WTC11 (cell line): ENCODE measurements at regions of chr11 and their contacts with region 1.

Region 1: GRCh38 chr11:75706260-75706729 is 11.3 kb upstream of the MOGAT2 start:
- DNase-seq: peak; percentile 80
- ATAC-seq: peak; percentile 99
- H3K4me3 Mint-ChIP-seq: no peak overlapping the region
- H3K27ac Mint-ChIP-seq: no peak overlapping the region
- H3K4me1 Mint-ChIP-seq: no peaks in the 10 kb centered on the region
- H3K27me3 Mint-ChIP-seq: peaks cover 19% of the 10 kb centered on the region
- CTCF ChIP-seq: peak; percentile 96

Region 2: GRCh38 chr11:75481223-75481921 is 224.9 kb before region 1 on chr11:
- CTCF ChIA-PET with region 1: no interaction called
- POLR2A ChIA-PET with region 1: no interaction called
- DNase-seq: no peak
- ATAC-seq: no peak
- H3K4me3 Mint-ChIP-seq: no peak overlapping the region
- H3K27ac Mint-ChIP-seq: no peak overlapping the region
- H3K4me1 Mint-ChIP-seq: peaks cover 2% of the 10 kb centered on the region
- H3K27me3 Mint-ChIP-seq: no peaks in the 10 kb centered on the region
- CTCF ChIP-seq: no peak

Region 3: DNA sequence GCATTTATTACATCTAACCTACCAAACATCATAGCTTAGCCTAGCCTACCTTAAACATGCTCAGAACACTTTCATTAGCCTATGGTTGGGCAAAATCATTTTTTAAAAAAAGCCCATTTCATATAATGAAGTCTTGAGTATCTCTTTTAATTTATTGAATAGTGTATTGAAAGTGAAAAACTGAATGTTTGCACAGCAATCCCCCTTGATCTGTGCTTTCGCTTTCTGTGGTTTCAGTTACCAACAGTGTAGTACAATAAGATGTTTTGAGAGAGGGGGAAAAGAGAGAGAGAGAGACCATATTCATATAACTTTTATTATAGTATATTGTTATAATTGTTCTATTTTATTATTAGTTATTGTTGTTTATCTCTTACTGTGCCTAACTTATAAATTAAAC is 29.0 kb before region 1 on chr11:
- CTCF ChIA-PET with region 1: interaction called, 11 read pairs
- POLR2A ChIA-PET with region 1: no interaction called
- DNase-seq: no peak
- ATAC-seq: no peak
- H3K4me3 Mint-ChIP-seq: no peak overlapping the region
- H3K27ac Mint-ChIP-seq: no peak overlapping the region
- H3K4me1 Mint-ChIP-seq: no peaks in the 10 kb centered on the region
- H3K27me3 Mint-ChIP-seq: peaks cover 27% of the 10 kb centered on the region
- CTCF ChIP-seq: no peak

Region 4: DNA sequence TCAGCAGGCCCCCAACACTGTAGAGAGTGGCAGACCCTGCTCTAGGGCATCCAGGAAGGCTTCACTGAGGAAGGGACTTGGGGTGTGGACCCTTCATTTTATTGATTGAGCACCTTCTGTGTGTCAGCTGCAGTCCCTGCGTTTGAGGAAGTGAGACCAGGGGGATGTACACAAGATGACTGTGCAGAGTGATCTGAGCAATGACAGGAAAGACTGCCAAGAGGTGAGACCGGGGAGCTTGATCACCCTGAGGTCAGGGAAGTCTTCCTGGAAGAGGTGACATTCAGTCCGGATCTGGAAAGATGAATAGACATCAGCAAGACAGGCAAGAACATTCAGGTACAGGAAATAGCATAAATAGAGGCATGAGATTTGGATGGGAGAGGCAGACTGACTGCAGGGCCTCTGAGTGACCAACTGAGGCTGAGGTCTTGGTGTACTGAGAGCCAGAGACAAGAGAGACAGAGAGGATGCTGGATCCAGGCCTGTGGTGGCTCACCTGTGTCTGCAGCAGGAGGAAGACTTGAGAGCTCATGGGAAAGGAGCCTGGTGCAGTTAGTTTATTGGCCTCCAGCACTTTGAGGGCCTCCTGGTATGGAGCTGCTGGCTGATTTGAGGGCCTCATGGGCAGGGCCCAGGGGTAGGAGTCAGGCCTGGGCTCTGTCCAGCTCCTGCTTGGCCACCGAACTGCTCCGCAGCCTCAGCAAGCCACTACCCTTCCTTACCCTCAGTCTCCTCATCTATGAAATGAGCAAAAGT is 67.5 kb after region 1 on chr11:
- CTCF ChIA-PET with region 1: interaction called, 11 read pairs
- POLR2A ChIA-PET with region 1: no interaction called
- DNase-seq: no peak
- ATAC-seq: no peak
- H3K4me3 Mint-ChIP-seq: no peak overlapping the region
- H3K27ac Mint-ChIP-seq: no peak overlapping the region
- H3K4me1 Mint-ChIP-seq: peaks cover 27% of the 10 kb centered on the region
- H3K27me3 Mint-ChIP-seq: peaks cover 44% of the 10 kb centered on the region
- CTCF ChIP-seq: no peak